ENCODE measurements at regions of chrX and their contacts with region 1.

Region 1: GRCh38 chrX:74382613-74383012 is 38.7 kb upstream of the SLC16A2 start:
- DNase-seq: peak; percentile 68
- ATAC-seq: peak; percentile 99
- H3K4me3 ChIP-seq: no peak overlapping the region
- H3K27ac ChIP-seq: no peak overlapping the region
- H3K4me1 ChIP-seq: no peaks in the 10 kb centered on the region
- H3K27me3 ChIP-seq: no peaks in the 10 kb centered on the region
- CTCF ChIP-seq: peak; percentile 72

Region 2: GRCh38 chrX:74272230-74272629 is 110.4 kb before region 1 on chrX:
- intact Hi-C with region 1: no loop called
- DNase-seq: no peak
- ATAC-seq: no peak
- H3K4me3 ChIP-seq: no peak overlapping the region
- H3K27ac ChIP-seq: no peak overlapping the region
- H3K4me1 ChIP-seq: no peaks in the 10 kb centered on the region
- H3K27me3 ChIP-seq: no peaks in the 10 kb centered on the region
- CTCF ChIP-seq: no peak

Region 3: GRCh38 chrX:74536152-74536831 is 153.7 kb after region 1 on chrX:
- intact Hi-C with region 1: loop called (anchors 10 kb)
- DNase-seq: peak; percentile 84
- ATAC-seq: peak; percentile 90
- H3K4me3 ChIP-seq: peak overlapping the region; percentile 56
- H3K27ac ChIP-seq: peak overlapping the region; percentile 85
- H3K4me1 ChIP-seq: no peaks in the 10 kb centered on the region
- H3K27me3 ChIP-seq: no peaks in the 10 kb centered on the region
- CTCF ChIP-seq: peak; percentile 42